AG04450 (cell line): ENCODE measurements at regions of chr2 and their contacts with region 1.

Region 1: DNA sequence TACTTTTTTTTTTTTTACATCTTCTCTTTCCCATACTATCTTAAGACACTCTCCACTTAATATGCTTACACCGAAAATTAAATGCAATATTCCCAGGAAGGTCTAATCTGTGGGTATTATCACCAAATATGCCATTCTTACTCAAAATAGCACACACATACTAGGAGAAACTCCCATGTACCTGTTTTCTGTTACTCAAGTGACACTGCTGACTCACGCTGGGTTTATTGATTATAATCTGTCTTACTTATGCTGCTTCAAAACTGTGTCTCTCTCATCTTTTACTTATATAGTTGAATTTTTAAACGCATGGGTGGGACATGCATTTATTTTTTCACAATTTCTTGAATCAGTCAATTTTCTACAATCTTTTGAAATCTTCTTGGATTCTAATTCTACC is 29.9 kb downstream of the MRPL19 start:
- DNase-seq: no peak
- H3K4me3 ChIP-seq: no peak overlapping the region
- H3K27ac ChIP-seq: no peak overlapping the region
- H3K27me3 ChIP-seq: no peaks in the 10 kb centered on the region
- CTCF ChIP-seq: no peak

Region 2: GRCh38 chr2:75634945-75635344 is 41.5 kb before region 1 on chr2:
- CTCF ChIA-PET with region 1: interaction called, 101 read pairs
- POLR2A ChIA-PET with region 1: no interaction called
- DNase-seq: no peak
- H3K4me3 ChIP-seq: no peak overlapping the region
- H3K27ac ChIP-seq: no peak overlapping the region
- H3K27me3 ChIP-seq: peaks cover 14% of the 10 kb centered on the region
- CTCF ChIP-seq: no peak

Region 3: GRCh38 chr2:75640621-75641121 is 35.8 kb before region 1 on chr2:
- CTCF ChIA-PET with region 1: interaction called, 101 read pairs
- POLR2A ChIA-PET with region 1: interaction called, 3 read pairs
- DNase-seq: peak; percentile 33
- H3K4me3 ChIP-seq: no peak overlapping the region
- H3K27ac ChIP-seq: no peak overlapping the region
- H3K27me3 ChIP-seq: peaks cover 14% of the 10 kb centered on the region
- CTCF ChIP-seq: peak; percentile 100

Region 4: GRCh38 chr2:75646583-75647425 is 29.7 kb before region 1 on chr2 and contains the start of gene MRPL19:
- CTCF ChIA-PET with region 1: interaction called, 101 read pairs
- POLR2A ChIA-PET with region 1: no interaction called
- DNase-seq: peak; percentile 76
- H3K4me3 ChIP-seq: peak within 1 kb of the TSS; percentile 89
- H3K27ac ChIP-seq: no peak within 1 kb of the TSS
- H3K27me3 ChIP-seq: no peaks in the 10 kb centered on the region
- CTCF ChIP-seq: no peak
- polyA plus RNA-seq, gene MRPL19: 39.4 and 59.1 TPM in 2 replicates

Region 5: GRCh38 chr2:75654012-75654411 is 22.5 kb before region 1 on chr2:
- CTCF ChIA-PET with region 1: interaction called, 42 read pairs
- POLR2A ChIA-PET with region 1: no interaction called
- DNase-seq: no peak
- H3K4me3 ChIP-seq: no peak overlapping the region
- H3K27ac ChIP-seq: no peak overlapping the region
- H3K27me3 ChIP-seq: no peaks in the 10 kb centered on the region
- CTCF ChIP-seq: no peak

Region 6: GRCh38 chr2:75688196-75688595 is 11.7 kb after region 1 on chr2:
- CTCF ChIA-PET with region 1: interaction called, 17 read pairs
- POLR2A ChIA-PET with region 1: no interaction called
- DNase-seq: no peak
- H3K4me3 ChIP-seq: no peak overlapping the region
- H3K27ac ChIP-seq: no peak overlapping the region
- H3K27me3 ChIP-seq: no peaks in the 10 kb centered on the region
- CTCF ChIP-seq: no peak